ENCODE measurements at regions of chr18 and their contacts with region 1.

Region 1: GRCh38 chr18:35029770-35030169 is 11.4 kb upstream of the MAPRE2 start:
- DNase-seq: no peak
- ATAC-seq: peak; percentile 87
- H3K4me3 ChIP-seq: peak overlapping the region; percentile 33; the same call in 1 of the 2 replicates
- H3K27ac ChIP-seq: peak overlapping the region; percentile 81
- H3K4me1 ChIP-seq: peaks cover 10% of the 10 kb centered on the region
- H3K27me3 ChIP-seq: no peaks in the 10 kb centered on the region
- CTCF ChIP-seq: peak in 2 of 3 experiments; percentile 15 to 16; a peak in 2 of 6 replicates
- EP300 ChIP-seq: no peak
- POLR2A ChIP-seq: no peak
- RAD21 ChIP-seq: no peak

Region 2: DNA sequence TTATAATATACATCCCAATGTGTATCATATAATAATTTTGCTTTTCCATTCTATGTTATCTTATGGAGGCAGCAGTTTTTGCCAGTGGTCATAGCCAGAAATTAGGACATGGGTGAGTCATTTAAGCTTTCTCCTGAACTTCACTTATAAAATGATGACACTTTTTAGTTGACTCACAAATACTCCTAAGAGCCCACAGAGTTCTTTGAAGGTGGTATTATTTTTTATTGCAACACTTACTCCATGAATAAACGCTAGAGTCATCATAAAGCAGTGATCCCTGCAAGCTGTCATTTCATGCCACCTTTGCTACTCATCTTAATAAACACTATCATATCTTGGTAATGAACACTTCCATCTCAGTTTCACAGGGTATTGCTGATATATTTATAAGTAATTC is 58.5 kb before region 1 on chr18:
- CTCF ChIA-PET with region 1: no interaction called
- POLR2A ChIA-PET with region 1: no interaction called
- RAD21 ChIA-PET with region 1: no interaction called
- SMC1A ChIA-PET with region 1: no interaction called
- in situ Hi-C with region 1: no loop called
- intact Hi-C with region 1: no loop called
- DNase-seq: no peak
- ATAC-seq: no peak
- H3K4me3 ChIP-seq: no peak overlapping the region
- H3K27ac ChIP-seq: no peak overlapping the region
- H3K4me1 ChIP-seq: no peaks in the 10 kb centered on the region
- H3K27me3 ChIP-seq: peaks cover 0 to 10% of the 10 kb centered on the region in 2 experiments; a peak in 1 of 4 replicates
- CTCF ChIP-seq: no peak
- EP300 ChIP-seq: no peak
- POLR2A ChIP-seq: no peak
- RAD21 ChIP-seq: no peak

Region 3: GRCh38 chr18:35005963-35006577 is 23.7 kb before region 1 on chr18:
- CTCF ChIA-PET with region 1: interaction called, 11 read pairs
- POLR2A ChIA-PET with region 1: no interaction called
- RAD21 ChIA-PET with region 1: interaction called, 25 read pairs
- SMC1A ChIA-PET with region 1: interaction called, 15 read pairs
- in situ Hi-C with region 1: no loop called
- intact Hi-C with region 1: no loop called
- DNase-seq: no peak
- ATAC-seq: peak; percentile 95
- H3K4me3 ChIP-seq: no peak overlapping the region
- H3K27ac ChIP-seq: no peak overlapping the region
- H3K4me1 ChIP-seq: no peaks in the 10 kb centered on the region
- H3K27me3 ChIP-seq: no peaks in the 10 kb centered on the region
- CTCF ChIP-seq: peak; percentile 44 to 64 (median 49); a peak in 4 of 6 replicates
- EP300 ChIP-seq: no peak
- POLR2A ChIP-seq: no peak
- RAD21 ChIP-seq: peak; percentile 89

Region 4: GRCh38 chr18:35050028-35050546 is 20.3 kb after region 1 on chr18:
- CTCF ChIA-PET with region 1: interaction called, 26 read pairs
- POLR2A ChIA-PET with region 1: interaction called, 9 read pairs
- RAD21 ChIA-PET with region 1: interaction called, 59 read pairs
- SMC1A ChIA-PET with region 1: interaction called, 61 read pairs
- in situ Hi-C with region 1: no loop called
- intact Hi-C with region 1: no loop called
- DNase-seq: no peak
- ATAC-seq: peak; percentile 66
- H3K4me3 ChIP-seq: peak overlapping the region; percentile 43
- H3K27ac ChIP-seq: peak overlapping the region; percentile 94
- H3K4me1 ChIP-seq: peaks cover 20% of the 10 kb centered on the region
- H3K27me3 ChIP-seq: no peaks in the 10 kb centered on the region
- CTCF ChIP-seq: no peak
- EP300 ChIP-seq: no peak
- POLR2A ChIP-seq: no peak
- RAD21 ChIP-seq: no peak

Region 5: DNA sequence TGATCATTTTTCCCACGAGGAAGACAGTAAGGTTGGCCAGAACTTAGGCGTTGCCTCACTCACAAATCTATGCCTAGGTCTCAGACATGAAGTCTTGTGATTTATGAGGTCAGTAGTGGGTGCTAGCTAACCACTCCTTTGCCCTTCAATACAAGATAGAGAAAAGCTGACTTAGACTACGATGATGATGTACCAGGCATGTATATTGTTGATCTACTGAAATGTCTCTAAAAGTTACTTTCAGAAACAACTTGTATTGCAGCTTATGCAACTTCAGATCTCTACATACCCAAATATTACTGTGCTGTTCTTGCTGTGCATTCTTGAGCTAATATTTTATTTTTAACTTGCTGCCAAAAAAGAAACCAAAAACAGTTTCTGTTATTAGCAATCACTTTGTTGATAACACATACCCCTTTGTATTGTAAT is 42.1 kb after region 1 on chr18:
- CTCF ChIA-PET with region 1: interaction called, 58 read pairs
- POLR2A ChIA-PET with region 1: interaction called, 10 read pairs
- RAD21 ChIA-PET with region 1: interaction called, 48 read pairs
- SMC1A ChIA-PET with region 1: interaction called, 19 read pairs
- in situ Hi-C with region 1: no loop called
- intact Hi-C with region 1: no loop called
- DNase-seq: no peak
- ATAC-seq: peak; percentile 84
- H3K4me3 ChIP-seq: no peak overlapping the region
- H3K27ac ChIP-seq: peak overlapping the region; percentile 52; the same call in 1 of the 2 replicates
- H3K4me1 ChIP-seq: peaks cover 15% of the 10 kb centered on the region
- H3K27me3 ChIP-seq: no peaks in the 10 kb centered on the region
- CTCF ChIP-seq: no peak
- EP300 ChIP-seq: no peak
- POLR2A ChIP-seq: no peak
- RAD21 ChIP-seq: no peak

Region 6: DNA sequence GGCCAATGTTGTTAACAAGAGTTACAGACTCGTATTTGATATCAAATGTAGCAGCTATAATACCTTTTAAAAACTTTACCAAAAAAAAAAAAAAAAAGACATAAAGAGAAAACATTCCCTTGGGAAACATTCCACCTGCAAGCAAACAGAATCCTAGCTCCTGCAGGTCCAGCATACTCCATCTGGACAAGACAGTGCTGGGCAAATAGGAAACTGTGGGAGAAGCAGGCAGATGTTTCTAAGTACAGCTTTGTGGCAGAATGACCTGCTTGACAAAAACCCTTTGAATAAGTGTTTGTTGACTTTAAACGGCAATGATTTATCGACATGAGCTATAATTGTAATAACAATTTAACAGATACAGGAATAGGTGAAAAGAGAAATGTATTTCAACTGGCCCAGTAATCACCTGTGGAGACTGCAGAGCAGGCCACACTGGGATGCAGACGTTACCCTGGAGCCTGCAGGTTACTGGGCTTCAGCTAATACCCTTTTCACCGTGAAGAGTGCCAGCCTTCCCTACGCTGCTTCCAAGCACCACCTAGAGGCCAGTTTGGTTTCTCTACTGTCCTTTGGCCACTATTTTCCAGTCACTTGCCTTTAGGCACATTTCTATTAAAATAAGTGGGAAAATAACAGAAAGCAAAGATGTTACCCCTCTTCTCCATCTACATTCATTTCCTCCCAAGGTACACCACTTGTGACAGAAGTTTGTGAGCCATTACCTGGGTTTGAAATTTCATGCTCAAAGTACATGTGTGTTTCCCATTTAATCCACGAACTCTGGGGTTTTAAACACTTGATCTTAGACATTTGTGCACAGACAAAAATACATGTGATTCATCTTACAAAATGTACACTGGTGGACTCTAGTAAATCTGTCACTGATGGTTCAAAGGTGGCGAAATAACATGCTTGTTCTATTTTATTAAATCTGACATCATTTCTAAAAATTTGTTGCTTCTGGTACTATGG is 114.1 kb after region 1 on chr18:
- CTCF ChIA-PET with region 1: interaction called, 157 read pairs
- POLR2A ChIA-PET with region 1: interaction called, 3 read pairs
- RAD21 ChIA-PET with region 1: interaction called, 83 read pairs
- SMC1A ChIA-PET with region 1: interaction called, 145 read pairs
- in situ Hi-C with region 1: no loop called
- intact Hi-C with region 1: loop called (anchors 1 kb)
- DNase-seq: no peak
- ATAC-seq: peak; percentile 97
- H3K4me3 ChIP-seq: no peak overlapping the region
- H3K27ac ChIP-seq: no peak overlapping the region
- H3K4me1 ChIP-seq: peaks cover 4% of the 10 kb centered on the region
- H3K27me3 ChIP-seq: no peaks in the 10 kb centered on the region
- CTCF ChIP-seq: peak; percentile 49 to 77 (median 74)
- EP300 ChIP-seq: no peak
- POLR2A ChIP-seq: no peak
- RAD21 ChIP-seq: peak; percentile 69

Region 7: GRCh38 chr18:35343936-35344735 is 314.4 kb after region 1 on chr18 and contains the start of gene ZNF24:
- CTCF ChIA-PET with region 1: interaction called, 4 read pairs
- POLR2A ChIA-PET with region 1: no interaction called
- RAD21 ChIA-PET with region 1: interaction called, 3 read pairs
- SMC1A ChIA-PET with region 1: interaction called, 3 read pairs
- in situ Hi-C with region 1: loop called (anchors 10 kb)
- intact Hi-C with region 1: no loop called
- DNase-seq: peak; percentile 61
- ATAC-seq: peak; percentile 95
- H3K4me3 ChIP-seq: peak within 1 kb of the TSS; percentile 82
- H3K27ac ChIP-seq: peak within 1 kb of the TSS; percentile 98
- H3K4me1 ChIP-seq: peaks cover 7% of the 10 kb centered on the region; the same call in 1 of the 2 replicates
- H3K27me3 ChIP-seq: no peaks in the 10 kb centered on the region
- CTCF ChIP-seq: no peak
- EP300 ChIP-seq: 0 out of 4 replicates have a peak, but pooled peaks of 1 of the 2 experiments have one; percentile 21
- POLR2A ChIP-seq: peak; percentile 91
- RAD21 ChIP-seq: no peak
- polyA plus RNA-seq, gene ZNF24: 19.3 to 41.6 TPM

Measured in GM12878 (cell line).